Breast epithelium (tissue), 4 donors: ENCODE measurements at regions of chr5 and their contacts with region 1.

Region 1: DNA sequence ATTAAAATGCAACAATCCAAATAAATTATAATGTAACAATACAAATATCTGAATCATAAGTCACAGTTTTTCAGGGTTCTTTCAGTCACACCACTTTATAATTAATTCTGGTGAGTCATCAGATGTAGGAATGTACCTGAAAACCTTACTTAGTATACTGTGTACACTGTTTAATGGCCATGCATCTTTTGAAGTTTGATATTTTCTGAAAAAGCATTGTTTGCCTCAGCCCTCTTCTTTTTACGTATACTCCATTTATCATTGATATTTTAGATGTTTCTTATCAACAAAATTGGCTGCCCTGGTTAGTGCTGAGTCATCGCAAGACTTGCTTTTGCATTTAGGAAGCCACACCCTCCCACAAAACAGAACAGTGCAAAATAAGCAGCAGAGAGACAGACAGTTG is 218.6 kb downstream of the PJA2 start:
- DNase-seq: no peak
- H3K4me3 ChIP-seq: no peak overlapping the region
- H3K27ac ChIP-seq: no peak overlapping the region
- H3K4me1 ChIP-seq: no peaks in the 10 kb centered on the region
- H3K27me3 ChIP-seq: no peaks in the 10 kb centered on the region
- CTCF ChIP-seq: no peak
- POLR2A ChIP-seq: no peak

Region 2: GRCh38 chr5:109388407-109388806 is 197.3 kb after region 1 on chr5:
- intact Hi-C with region 1: loop called (anchors 10 kb)
- DNase-seq: no peak
- H3K4me3 ChIP-seq: no peak overlapping the region
- H3K27ac ChIP-seq: no peak overlapping the region
- H3K4me1 ChIP-seq: peaks cover 0 to 12% of the 10 kb centered on the region in 2 donors
- H3K27me3 ChIP-seq: no peaks in the 10 kb centered on the region
- CTCF ChIP-seq: no peak
- POLR2A ChIP-seq: no peak